ENCODE measurements at regions of chr22 and their contacts with region 1.

Region 1: DNA sequence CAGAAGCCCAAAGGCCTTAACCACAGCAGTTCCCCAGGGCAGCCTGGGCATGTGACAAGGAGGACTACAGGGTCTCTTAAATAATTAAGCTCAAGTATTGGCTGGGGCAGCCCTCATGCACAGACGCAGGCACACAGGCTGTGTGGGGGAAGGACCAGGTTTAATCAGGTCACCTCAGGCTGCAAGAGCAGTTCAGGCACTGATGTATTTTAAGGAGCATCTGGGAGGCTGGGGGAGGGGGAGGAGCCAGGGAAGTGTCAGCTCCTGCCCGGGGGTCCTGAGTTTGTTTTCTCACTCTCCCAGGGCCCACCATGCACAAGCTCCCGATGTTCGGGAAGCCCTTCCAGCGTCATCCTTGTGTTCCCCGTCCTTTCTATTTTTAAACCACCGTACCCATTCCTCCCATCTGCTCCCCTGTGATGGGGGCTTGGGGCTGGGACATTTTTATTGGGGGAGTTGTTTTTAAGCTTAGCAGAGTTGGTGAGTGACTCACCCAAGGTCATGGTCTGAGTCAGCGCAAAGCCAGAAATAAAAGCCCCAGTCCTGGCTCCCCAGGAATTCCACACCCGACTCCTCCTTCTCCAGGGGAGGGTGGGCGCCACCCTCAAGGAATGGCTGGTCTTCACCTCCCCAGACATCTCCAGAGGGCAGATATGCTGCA is 2.4 kb downstream of the CSDC2 start:
- DNase-seq: no peak
- ATAC-seq: peak; percentile 21

Region 2: DNA sequence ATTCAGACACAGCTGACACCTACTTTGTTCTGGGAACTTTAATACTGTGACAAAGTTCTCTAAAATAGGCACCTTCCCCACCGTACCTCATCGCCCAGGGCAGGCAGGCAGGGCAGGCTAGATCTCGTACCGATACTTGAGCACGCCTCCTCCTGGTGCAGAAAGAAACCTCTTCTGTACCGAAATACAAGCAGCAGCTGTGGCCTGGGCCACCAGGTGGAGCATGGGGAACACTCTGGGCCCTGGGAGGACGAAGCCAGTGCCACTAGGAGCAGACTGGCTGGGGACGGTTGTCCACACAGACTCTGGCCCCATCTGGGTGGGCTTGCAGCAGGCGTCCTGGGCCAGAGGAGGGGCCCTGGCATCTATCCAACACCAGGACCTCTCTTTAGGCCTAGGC is 13.7 kb after region 1 on chr22:
- intact Hi-C with region 1: loop called (anchors 2 kb)
- DNase-seq: peak; percentile 82
- ATAC-seq: peak; percentile 60